ENCODE measurements at regions of chr1 and their contacts with region 1.

Region 1: GRCh38 chr1:203702130-203702577 is 62.8 kb upstream of the LAX1 start:
- DNase-seq: peak; percentile 62
- H3K4me3 ChIP-seq: no peak overlapping the region
- H3K27ac ChIP-seq: no peak overlapping the region
- H3K4me1 ChIP-seq: no peaks in the 10 kb centered on the region
- H3K27me3 ChIP-seq: no peaks in the 10 kb centered on the region
- CTCF ChIP-seq: peak; percentile 71 to 82
- POLR2A ChIP-seq: no peak

Region 2: GRCh38 chr1:203273206-203273868 is 428.8 kb before region 1 on chr1:
- CTCF ChIA-PET with region 1: interaction called, 12 read pairs
- POLR2A ChIA-PET with region 1: no interaction called
- dilution Hi-C with region 1: no loop called
- intact Hi-C with region 1: loop called (anchors 5 kb)
- DNase-seq: peak; percentile 76
- H3K4me3 ChIP-seq: no peak overlapping the region
- H3K27ac ChIP-seq: no peak overlapping the region
- H3K4me1 ChIP-seq: peaks cover 5% of the 10 kb centered on the region
- H3K27me3 ChIP-seq: peaks cover 4 to 6% of the 10 kb centered on the region in 2 experiments
- CTCF ChIP-seq: peak; percentile 96 to 97
- POLR2A ChIP-seq: no peak

Region 3: GRCh38 chr1:203486618-203487370 is 215.4 kb before region 1 on chr1:
- CTCF ChIA-PET with region 1: interaction called, 13 read pairs
- POLR2A ChIA-PET with region 1: no interaction called
- dilution Hi-C with region 1: no loop called
- intact Hi-C with region 1: no loop called
- DNase-seq: no peak
- H3K4me3 ChIP-seq: peak overlapping the region in 2 of 3 experiments; percentile 37 to 38
- H3K27ac ChIP-seq: peak overlapping the region; percentile 52
- H3K4me1 ChIP-seq: no peaks in the 10 kb centered on the region
- H3K27me3 ChIP-seq: peaks cover 5 to 8% of the 10 kb centered on the region in 2 experiments
- CTCF ChIP-seq: no peak
- POLR2A ChIP-seq: no peak

Region 4: GRCh38 chr1:203512830-203513611 is 189.1 kb before region 1 on chr1:
- CTCF ChIA-PET with region 1: interaction called, 161 read pairs
- POLR2A ChIA-PET with region 1: no interaction called
- dilution Hi-C with region 1: no loop called
- intact Hi-C with region 1: no loop called
- DNase-seq: peak; percentile 85
- H3K4me3 ChIP-seq: no peak overlapping the region
- H3K27ac ChIP-seq: peak overlapping the region; percentile 83
- H3K4me1 ChIP-seq: peaks cover 35% of the 10 kb centered on the region
- H3K27me3 ChIP-seq: no peaks in the 10 kb centered on the region
- CTCF ChIP-seq: no peak
- POLR2A ChIP-seq: no peak

Region 5: GRCh38 chr1:203526572-203526971 is 175.6 kb before region 1 on chr1:
- CTCF ChIA-PET with region 1: no interaction called
- POLR2A ChIA-PET with region 1: no interaction called
- dilution Hi-C with region 1: no loop called
- intact Hi-C with region 1: no loop called
- DNase-seq: no peak
- H3K4me3 ChIP-seq: no peak overlapping the region
- H3K27ac ChIP-seq: no peak overlapping the region
- H3K4me1 ChIP-seq: no peaks in the 10 kb centered on the region
- H3K27me3 ChIP-seq: no peaks in the 10 kb centered on the region
- CTCF ChIP-seq: no peak
- POLR2A ChIP-seq: no peak

Region 6: DNA sequence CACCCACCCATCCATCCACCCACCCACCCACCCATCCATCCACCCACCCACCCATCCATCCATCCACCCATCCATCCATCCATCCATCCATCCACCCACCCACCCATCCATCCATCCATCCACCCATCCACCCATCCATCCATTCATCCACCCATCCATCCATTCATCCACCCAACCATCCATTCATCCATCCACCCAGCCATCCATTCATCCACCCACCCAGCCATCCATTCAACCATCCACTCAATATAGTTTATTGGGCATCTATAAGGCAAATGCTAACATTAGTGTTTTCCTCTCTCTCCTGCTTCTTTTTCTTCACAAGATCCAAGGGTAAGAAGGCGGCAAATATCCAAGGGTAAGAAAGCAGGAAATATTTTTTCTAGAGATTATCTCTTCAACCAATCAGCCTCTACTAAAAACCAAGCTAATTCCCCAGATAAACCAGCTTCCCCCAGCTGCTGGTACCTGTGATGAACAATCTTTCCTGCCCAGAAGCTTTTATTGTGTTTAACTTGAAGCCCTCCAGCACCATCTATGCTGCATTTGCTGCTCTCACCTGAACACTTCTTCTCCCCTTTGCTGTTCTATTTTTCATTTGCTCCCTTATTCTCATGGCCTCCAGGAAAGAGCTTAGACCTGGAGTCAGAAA is 98.1 kb before region 1 on chr1:
- CTCF ChIA-PET with region 1: interaction called, 33 read pairs
- POLR2A ChIA-PET with region 1: no interaction called
- dilution Hi-C with region 1: no loop called
- intact Hi-C with region 1: loop called (anchors 5 kb)
- DNase-seq: no peak
- H3K4me3 ChIP-seq: no peak overlapping the region
- H3K27ac ChIP-seq: no peak overlapping the region
- H3K4me1 ChIP-seq: peaks cover 15% of the 10 kb centered on the region
- H3K27me3 ChIP-seq: no peaks in the 10 kb centered on the region
- CTCF ChIP-seq: no peak
- POLR2A ChIP-seq: no peak

Region 7: DNA sequence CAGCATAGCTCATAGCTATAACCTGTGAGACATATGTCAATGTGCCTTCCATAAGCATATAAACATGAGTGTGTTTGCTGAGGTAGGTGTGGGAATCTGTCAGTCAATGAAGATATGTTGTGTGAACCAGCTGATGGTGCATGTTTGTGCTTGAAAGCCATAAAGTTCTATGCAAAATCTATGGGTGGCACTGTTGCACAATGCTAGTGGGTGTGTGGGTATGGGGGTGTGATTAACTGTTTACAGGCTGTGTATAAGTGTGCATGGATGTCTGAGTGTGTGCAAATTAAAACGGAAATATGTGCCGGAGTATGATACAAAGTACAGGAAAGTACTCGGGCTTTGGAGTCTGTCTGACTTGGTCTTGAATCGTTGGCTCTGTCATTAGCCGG is 76.5 kb before region 1 on chr1:
- CTCF ChIA-PET with region 1: interaction called, 73 read pairs
- POLR2A ChIA-PET with region 1: no interaction called
- dilution Hi-C with region 1: no loop called
- intact Hi-C with region 1: loop called (anchors 1 kb)
- DNase-seq: peak; percentile 89
- H3K4me3 ChIP-seq: no peak overlapping the region
- H3K27ac ChIP-seq: no peak overlapping the region
- H3K4me1 ChIP-seq: peaks cover 40% of the 10 kb centered on the region
- H3K27me3 ChIP-seq: no peaks in the 10 kb centered on the region
- CTCF ChIP-seq: peak; percentile 37 to 39
- POLR2A ChIP-seq: no peak

Region 8: DNA sequence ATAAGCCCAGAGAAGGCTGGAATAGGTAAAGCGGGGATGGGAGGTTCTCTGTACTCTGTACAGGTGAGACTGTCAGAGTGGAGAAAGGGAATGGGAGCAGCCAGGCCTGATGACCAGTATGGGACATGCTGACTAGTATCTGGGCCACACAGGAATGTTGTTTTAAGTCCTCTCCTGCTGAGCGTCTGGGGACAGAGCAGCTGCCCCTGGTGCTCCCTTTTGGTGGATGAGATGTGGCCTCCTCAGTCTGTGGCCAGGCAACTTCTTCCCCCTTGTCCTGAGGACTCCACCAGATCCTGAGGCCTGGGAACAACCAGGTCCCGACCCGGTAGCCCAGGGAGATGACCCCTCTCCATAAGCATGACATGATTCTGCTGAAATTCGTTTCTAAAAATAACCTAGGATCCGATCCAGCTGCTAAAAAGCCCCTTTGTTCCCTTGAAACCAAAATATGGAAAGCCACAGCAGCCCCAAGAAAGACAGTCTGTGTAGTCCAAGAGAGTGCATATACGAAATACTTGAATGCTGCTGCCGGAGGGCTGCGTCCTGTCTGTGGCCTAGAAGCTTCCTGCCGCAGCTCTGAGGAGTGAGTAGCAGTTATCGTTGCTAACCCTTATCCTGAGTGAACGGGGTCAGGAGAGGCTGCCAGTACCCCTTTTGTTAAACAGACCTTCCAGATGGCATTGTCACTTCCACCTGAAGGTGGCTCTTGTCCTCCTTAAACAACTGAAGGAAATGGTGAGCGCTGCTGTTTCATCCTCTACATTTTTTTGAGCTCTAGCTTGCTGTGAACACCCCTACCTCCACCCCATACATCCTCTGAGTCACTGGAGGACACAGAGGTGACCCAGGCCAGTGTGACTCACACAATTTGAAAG is 28.4 kb before region 1 on chr1:
- CTCF ChIA-PET with region 1: interaction called, 36 read pairs
- POLR2A ChIA-PET with region 1: no interaction called
- dilution Hi-C with region 1: no loop called
- intact Hi-C with region 1: loop called (anchors 1 kb)
- DNase-seq: peak; percentile 97
- H3K4me3 ChIP-seq: no peak overlapping the region
- H3K27ac ChIP-seq: peak overlapping the region; percentile 88
- H3K4me1 ChIP-seq: peaks cover 41% of the 10 kb centered on the region
- H3K27me3 ChIP-seq: no peaks in the 10 kb centered on the region
- CTCF ChIP-seq: no peak
- POLR2A ChIP-seq: no peak